ENCODE measurements at regions of chr2 and their contacts with region 1.

Region 1: DNA sequence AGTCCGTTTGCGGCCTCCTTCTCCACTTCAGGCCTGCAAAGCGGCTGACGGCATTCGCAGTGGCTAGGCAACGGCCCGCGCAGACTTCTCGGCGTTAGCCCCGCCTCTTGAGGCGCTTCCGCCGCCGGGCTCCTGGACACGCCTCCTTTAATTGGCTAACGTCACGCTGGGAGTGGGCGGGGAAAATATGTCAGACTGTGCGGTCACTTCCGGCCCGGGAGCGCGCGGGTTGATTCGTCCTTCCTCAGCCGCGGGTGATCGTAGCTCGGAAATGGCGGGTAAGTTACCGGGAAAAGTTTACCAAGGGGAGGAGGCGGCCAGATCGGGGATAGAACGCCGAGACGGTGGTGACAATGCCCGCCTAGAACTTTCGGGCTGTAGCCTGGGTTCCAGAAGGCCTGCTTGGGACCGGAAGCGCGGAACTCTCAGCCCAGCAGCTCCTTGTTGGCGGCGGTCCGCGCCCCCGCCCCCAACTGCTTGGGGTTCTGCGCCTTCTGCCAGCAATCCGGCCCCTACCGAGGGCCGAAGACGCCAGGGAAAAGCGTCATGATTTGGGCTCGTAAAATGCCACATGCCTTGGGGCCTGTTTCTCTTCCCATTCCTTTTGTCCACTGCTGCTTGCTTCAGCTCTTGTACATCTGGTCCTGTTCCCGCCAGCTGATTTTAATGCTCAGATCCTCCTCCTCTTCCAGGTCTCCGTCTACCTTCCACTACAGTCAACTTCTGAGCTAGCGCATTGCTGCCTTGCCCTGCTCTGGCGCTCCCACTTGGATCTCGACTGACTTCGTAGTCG is at the start of gene HAT1:
- DNase-seq: peak; percentile 99
- H3K4me3 ChIP-seq: peak within 1 kb of the TSS; percentile 32 to 79 (median 57)
- H3K27ac ChIP-seq: peak within 1 kb of the TSS; percentile 77
- H3K4me1 ChIP-seq: peaks cover 13% of the 10 kb centered on the region
- H3K27me3 ChIP-seq: no peaks in the 10 kb centered on the region
- CTCF ChIP-seq: no peak
- POLR2A ChIP-seq: peak; percentile 59
- total RNA-seq, gene HAT1: 49.7 and 50.3 TPM in 2 replicates

Region 2: DNA sequence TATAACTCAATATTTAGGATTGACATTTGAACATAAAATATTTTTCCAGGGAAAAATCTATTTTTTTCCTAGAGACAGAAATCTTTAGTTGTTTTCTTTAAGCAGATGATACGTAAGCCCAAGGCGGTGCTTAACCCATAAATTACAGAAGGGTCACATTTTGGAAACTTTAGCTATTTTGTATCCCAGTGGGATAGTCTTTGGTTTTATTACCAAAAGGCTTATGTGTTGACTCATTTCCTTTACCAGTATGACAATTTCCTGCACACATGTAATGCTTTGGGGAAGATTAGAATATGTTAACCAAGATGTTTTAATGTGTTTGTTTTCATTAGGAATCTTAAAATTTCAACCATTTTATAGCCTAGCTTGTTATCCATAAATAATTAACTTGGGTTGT is 210.4 kb before region 1 on chr2:
- CTCF ChIA-PET with region 1: no interaction called
- POLR2A ChIA-PET with region 1: no interaction called
- dilution Hi-C with region 1: no loop called
- intact Hi-C with region 1: loop called (anchors 2 kb)
- DNase-seq: peak; percentile 91
- H3K4me3 ChIP-seq: peak overlapping the region in 1 of 3 experiments; percentile 43
- H3K27ac ChIP-seq: peak overlapping the region; percentile 97
- H3K4me1 ChIP-seq: peaks cover 39% of the 10 kb centered on the region
- H3K27me3 ChIP-seq: no peaks in the 10 kb centered on the region
- CTCF ChIP-seq: no peak
- POLR2A ChIP-seq: peak; percentile 37

Region 3: GRCh38 chr2:171811245-171811628 is 111.2 kb before region 1 on chr2:
- CTCF ChIA-PET with region 1: no interaction called
- POLR2A ChIA-PET with region 1: no interaction called
- dilution Hi-C with region 1: no loop called
- intact Hi-C with region 1: loop called (anchors 5 kb)
- DNase-seq: peak; percentile 61
- H3K4me3 ChIP-seq: no peak overlapping the region
- H3K27ac ChIP-seq: no peak overlapping the region
- H3K4me1 ChIP-seq: peaks cover 6% of the 10 kb centered on the region
- H3K27me3 ChIP-seq: no peaks in the 10 kb centered on the region
- CTCF ChIP-seq: peak in 1 of 2 donors; percentile 10
- POLR2A ChIP-seq: no peak

Region 4: DNA sequence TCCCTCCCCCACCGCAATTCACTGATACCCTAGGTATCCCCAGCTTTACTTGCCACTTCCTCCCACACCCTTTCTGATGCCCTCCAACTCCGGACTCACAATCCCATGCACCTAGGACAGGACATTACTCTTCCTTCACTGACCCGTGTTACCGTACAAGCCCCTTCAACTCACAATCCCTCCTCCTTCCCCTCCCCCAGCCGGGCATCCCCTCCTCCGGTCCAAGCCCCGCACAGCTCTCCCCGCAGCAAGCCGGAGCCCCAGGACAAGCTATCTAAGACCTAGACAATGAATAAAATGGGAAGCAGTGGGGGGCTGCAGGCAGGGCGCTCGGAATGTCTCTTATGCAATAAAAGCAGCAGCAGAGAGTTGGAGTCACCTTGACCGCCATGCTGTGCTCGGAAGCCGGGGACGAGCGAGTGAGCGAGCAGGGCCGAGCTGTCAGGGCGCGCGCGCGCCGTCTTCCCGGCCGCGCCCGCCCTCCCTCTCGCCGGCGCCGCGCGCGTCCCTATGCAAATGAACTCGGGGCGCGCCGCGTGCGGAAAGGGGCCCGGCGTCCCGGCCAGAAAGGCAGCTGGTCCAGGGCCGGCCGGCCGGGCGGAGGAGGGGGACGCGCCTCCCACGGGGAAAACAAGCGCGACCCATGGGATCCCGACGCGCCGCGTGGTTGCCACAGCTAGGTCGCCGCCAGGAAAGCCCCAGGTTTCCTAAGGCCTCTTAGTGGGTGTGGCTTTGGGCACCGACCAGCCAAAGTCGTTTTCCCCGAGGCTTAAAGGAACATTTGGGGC is 28.4 kb before region 1 on chr2 and contains the start of gene SLC25A12:
- CTCF ChIA-PET with region 1: interaction called, 5 read pairs
- POLR2A ChIA-PET with region 1: no interaction called
- dilution Hi-C with region 1: no loop called
- intact Hi-C with region 1: loop called (anchors 1 kb)
- DNase-seq: peak; percentile 81
- H3K4me3 ChIP-seq: peak within 1 kb of the TSS; percentile 63 to 83 (median 64)
- H3K27ac ChIP-seq: peak within 1 kb of the TSS; percentile 65
- H3K4me1 ChIP-seq: peaks cover 9% of the 10 kb centered on the region
- H3K27me3 ChIP-seq: no peaks in the 10 kb centered on the region
- CTCF ChIP-seq: no peak
- POLR2A ChIP-seq: peak; percentile 74
- total RNA-seq, gene SLC25A12: 17.1 and 17.5 TPM in 2 replicates

Region 5: DNA sequence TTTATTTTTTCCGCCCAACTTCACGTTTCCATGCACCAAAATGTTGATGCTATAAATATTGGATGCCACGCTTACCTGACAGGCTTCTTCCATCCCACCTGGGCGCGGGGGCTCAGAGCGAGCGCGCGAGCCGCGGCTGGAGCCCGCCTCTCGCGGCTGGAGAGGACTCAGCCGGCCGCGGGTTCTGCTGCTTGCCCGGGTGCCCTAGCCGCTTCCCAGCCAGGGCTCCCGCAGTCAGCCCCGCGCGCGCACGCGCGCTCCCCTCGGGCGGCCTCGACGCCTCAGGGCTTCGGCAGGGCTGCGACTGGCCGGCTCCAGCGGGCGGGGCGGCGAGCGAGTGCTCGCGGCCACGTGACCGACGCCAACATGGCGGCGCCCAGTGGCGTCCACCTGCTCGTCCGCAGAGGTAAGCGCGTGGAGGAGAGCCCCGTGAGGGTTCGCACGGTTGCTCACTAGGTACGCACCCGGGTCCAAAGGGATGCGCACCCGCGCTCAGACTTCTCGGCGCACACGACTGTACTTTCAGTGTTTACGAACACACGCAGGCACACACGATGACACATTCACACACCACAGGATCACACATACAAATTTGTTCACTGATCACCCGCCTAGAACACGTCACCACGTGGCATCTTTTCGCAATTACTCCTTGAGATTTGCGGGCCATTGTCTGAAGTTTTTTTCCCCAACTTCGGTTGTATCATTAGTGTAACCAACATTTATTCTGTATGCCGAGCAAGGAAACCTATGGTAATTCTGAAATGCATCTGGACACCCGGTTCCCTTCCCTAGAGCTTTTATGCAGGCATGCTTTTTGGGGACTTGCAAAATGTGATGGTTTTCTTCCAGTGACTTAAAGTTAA is 77.4 kb after region 1 on chr2 and contains the start of gene METAP1D:
- CTCF ChIA-PET with region 1: no interaction called
- POLR2A ChIA-PET with region 1: no interaction called
- dilution Hi-C with region 1: no loop called
- intact Hi-C with region 1: loop called (anchors 2 kb)
- DNase-seq: peak; percentile 94
- H3K4me3 ChIP-seq: peak within 1 kb of the TSS; percentile 10 to 93 (median 65)
- H3K27ac ChIP-seq: peak within 1 kb of the TSS; percentile 18
- H3K4me1 ChIP-seq: peaks cover 9% of the 10 kb centered on the region
- H3K27me3 ChIP-seq: peaks cover 8 to 16% of the 10 kb centered on the region in 2 experiments
- CTCF ChIP-seq: no peak
- POLR2A ChIP-seq: peak; percentile 82
- total RNA-seq, gene METAP1D: 8.1 TPM in 2 replicates

Region 6: DNA sequence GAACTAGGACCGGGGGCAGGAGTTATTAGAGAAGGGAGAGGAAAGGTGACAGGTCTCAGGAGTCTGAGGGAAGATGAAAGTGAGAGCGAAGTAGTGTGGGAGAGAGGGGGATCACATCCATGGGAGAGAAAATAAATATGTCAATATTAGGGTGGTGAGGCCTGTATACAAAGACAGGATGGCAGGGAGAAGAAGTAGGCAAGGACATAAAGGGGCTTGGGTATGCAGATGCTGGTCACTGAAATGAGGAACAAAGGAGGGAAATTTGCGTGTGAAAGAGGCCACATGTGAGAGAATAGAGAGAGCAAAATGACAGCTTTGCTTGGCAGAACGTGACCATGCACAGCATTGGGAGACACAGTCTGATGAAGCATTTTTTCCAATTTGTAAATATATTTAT is 91.0 kb after region 1 on chr2:
- CTCF ChIA-PET with region 1: no interaction called
- POLR2A ChIA-PET with region 1: no interaction called
- dilution Hi-C with region 1: no loop called
- intact Hi-C with region 1: no loop called
- DNase-seq: no peak
- H3K4me3 ChIP-seq: no peak overlapping the region
- H3K27ac ChIP-seq: no peak overlapping the region
- H3K4me1 ChIP-seq: no peaks in the 10 kb centered on the region
- H3K27me3 ChIP-seq: no peaks in the 10 kb centered on the region
- CTCF ChIP-seq: no peak
- POLR2A ChIP-seq: no peak

Region 7: GRCh38 chr2:172038604-172039003 is 116.2 kb after region 1 on chr2:
- CTCF ChIA-PET with region 1: no interaction called
- POLR2A ChIA-PET with region 1: no interaction called
- dilution Hi-C with region 1: no loop called
- intact Hi-C with region 1: no loop called
- DNase-seq: no peak
- H3K4me3 ChIP-seq: no peak overlapping the region
- H3K27ac ChIP-seq: no peak overlapping the region
- H3K4me1 ChIP-seq: no peaks in the 10 kb centered on the region
- H3K27me3 ChIP-seq: no peaks in the 10 kb centered on the region
- CTCF ChIP-seq: no peak
- POLR2A ChIP-seq: no peak

Region 8: DNA sequence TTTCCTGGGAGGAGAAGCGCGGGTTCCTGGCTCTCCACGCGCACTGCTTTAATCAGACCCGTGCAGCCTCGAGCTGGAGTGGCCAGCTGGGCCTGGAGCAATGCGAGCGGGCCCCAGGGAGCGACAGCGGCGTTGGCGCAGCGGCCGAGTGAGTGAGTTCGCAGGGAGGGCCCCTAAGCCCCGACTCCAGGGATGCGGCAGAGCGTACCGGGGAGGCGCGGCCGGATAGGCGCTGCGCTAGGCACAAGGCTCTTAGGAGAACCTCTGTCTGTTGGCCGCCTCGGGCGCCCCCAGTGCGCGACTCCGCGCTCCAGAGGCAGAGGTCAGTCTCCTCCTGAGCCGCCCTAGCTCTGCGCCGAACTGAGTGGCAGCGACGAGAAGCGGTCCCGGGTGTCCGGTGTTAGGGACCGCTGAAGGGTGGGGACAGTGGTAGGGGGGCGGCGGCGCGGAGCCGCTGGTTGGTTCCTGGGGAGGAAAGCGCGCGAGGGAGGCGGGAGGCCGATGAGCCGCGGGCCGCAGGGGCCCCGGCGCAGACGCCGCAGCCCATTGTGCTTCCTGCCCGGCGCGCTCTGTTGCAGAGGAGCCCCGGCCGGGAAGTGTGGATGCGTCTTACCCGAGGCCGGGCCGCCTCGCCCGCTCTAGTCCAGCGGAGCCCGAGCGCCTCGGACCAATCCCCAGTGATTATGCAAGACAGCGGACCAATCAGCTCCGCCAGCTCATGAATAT is 162.5 kb after region 1 on chr2:
- CTCF ChIA-PET with region 1: no interaction called
- POLR2A ChIA-PET with region 1: no interaction called
- dilution Hi-C with region 1: no loop called
- intact Hi-C with region 1: loop called (anchors 2 kb)
- DNase-seq: peak; percentile 83
- H3K4me3 ChIP-seq: peak overlapping the region; percentile 26 to 40 (median 30)
- H3K27ac ChIP-seq: no peak overlapping the region
- H3K4me1 ChIP-seq: peaks cover 20% of the 10 kb centered on the region
- H3K27me3 ChIP-seq: peaks cover 92 to 100% of the 10 kb centered on the region in 2 experiments
- CTCF ChIP-seq: no peak
- POLR2A ChIP-seq: no peak

Region 9: DNA sequence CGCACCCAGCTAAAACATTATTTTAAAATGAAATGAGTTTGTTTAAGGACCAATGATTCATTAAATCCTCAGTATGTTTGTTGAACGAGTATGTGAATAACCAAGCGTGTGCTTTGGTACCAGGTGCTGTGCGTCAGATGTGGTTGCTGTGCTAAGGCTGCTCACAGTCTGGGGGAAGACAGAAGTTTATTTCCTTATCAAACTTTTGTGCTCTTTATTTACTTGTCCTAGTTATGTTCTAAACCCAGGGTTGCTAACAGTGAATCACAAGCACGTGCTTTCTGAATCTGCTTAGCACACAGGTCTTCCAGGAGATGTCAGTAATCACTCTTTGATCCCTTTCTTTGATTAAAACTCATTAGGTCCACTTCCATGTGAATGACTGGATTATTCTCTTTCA is 850.2 kb after region 1 on chr2:
- CTCF ChIA-PET with region 1: no interaction called
- POLR2A ChIA-PET with region 1: no interaction called
- dilution Hi-C with region 1: no loop called
- intact Hi-C with region 1: no loop called
- DNase-seq: no peak
- H3K4me3 ChIP-seq: no peak overlapping the region
- H3K27ac ChIP-seq: no peak overlapping the region
- H3K4me1 ChIP-seq: no peaks in the 10 kb centered on the region
- H3K27me3 ChIP-seq: peaks cover 0 to 2% of the 10 kb centered on the region in 2 experiments
- CTCF ChIP-seq: no peak
- POLR2A ChIP-seq: no peak

Measured in endothelial cell of umbilical vein (primary cell).